ENCODE measurements at regions of chrX and their contacts with region 1.

Region 1: DNA sequence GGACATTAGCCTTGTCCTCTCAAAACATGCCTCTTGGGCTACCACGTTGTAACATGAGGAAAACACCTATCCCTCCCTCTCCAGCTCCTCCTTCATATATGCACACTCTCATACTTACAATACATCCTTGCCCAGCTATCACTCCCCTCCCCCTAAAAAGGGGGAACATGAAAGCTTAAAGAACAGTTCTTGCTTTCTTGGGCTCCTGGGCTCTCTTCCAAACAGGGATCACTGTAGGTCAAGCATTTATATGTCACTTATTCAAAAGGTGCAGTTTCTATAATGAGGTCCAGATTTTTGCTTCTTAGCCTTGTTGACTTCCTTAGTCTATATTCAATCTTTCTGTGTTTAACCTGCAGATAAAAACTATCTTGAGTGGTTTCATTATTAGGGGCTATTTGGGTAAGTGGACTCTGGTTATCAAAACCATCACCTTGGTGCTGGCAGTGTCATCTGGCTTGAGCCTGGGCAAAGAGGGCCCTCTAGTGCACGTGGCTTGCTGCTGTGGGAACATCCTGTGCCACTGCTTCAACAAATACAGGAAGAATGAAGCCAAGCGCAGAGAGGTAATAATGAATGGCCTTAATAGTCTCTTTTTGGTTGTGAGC is 119.4 kb downstream of the AKAP4 start:
- DNase-seq: peak; percentile 46
- ATAC-seq: peak; percentile 86
- H3K4me3 ChIP-seq: no peak overlapping the region
- H3K27ac ChIP-seq: no peak overlapping the region
- H3K4me1 ChIP-seq: no peaks in the 10 kb centered on the region
- H3K27me3 ChIP-seq: no peaks in the 10 kb centered on the region
- CTCF ChIP-seq: peak; percentile 66

Region 2: DNA sequence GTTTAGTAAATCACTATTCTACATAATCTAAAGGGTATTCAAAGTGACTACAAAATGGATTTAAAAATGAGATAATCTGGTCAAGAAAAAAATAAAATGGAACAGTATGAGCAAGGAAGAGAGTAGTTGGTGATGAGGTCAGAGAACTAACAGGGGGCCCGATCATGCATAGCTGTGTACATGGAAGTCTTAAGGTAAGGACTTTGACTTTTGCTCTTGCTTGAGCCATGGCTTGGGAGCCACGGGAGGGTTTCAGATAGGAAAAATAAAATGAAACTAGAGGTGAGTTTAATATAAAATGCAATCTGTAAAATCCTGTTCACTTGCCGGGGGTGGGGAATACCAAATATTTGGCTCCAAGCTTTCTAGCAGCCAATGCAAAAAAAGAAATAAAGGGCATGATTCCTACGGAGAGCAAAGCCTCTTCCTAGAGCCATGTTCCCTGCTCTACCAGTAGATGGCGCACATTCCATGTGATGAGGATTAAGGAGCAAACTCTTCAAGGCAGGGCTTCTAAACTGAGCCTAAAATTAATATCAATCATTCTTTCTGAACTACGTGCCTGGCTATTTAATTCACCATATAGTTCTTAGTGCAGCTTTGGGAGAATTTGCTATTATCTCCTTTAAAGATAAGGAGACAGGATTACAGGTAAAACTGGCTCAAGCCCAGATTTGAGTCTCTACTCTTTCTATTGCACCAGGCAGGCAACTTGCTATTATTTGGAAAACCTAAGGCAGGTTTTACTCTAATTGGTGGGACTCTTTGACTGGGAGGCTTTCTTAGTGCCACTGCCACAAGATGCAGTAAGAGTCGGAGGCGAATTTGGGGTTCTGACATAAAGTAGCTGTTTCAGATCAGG is 165.8 kb before region 1 on chrX:
- CTCF ChIA-PET with region 1: no interaction called
- POLR2A ChIA-PET with region 1: no interaction called
- intact Hi-C with region 1: loop called (anchors 1 kb)
- DNase-seq: peak; percentile 69
- ATAC-seq: peak; percentile 90
- H3K4me3 ChIP-seq: no peak overlapping the region
- H3K27ac ChIP-seq: no peak overlapping the region
- H3K4me1 ChIP-seq: no peaks in the 10 kb centered on the region
- H3K27me3 ChIP-seq: no peaks in the 10 kb centered on the region
- CTCF ChIP-seq: peak; percentile 85